ENCODE measurements at regions of chr9 and their contacts with region 1.

Region 1: GRCh38 chr9:130860458-130861316 is 25.6 kb downstream of the ABL1 start:
- DNase-seq: peak; percentile 22 to 85 (median 68)
- ATAC-seq: peak; percentile 95
- H3K4me3 ChIP-seq: no peak overlapping the region
- H3K27ac ChIP-seq: peak overlapping the region; percentile 34 to 35
- H3K4me1 ChIP-seq: peaks cover 5 to 23% of the 10 kb centered on the region in 2 donors
- H3K27me3 ChIP-seq: no peaks in the 10 kb centered on the region
- CTCF ChIP-seq: no peak

Region 2: GRCh38 chr9:130768265-130768664 is 92.4 kb before region 1 on chr9:
- intact Hi-C with region 1: loop called in 1 of 2 experiments (anchors 5 kb)
- DNase-seq: no peak
- ATAC-seq: peak; percentile 17
- H3K4me3 ChIP-seq: no peak overlapping the region
- H3K27ac ChIP-seq: no peak overlapping the region
- H3K4me1 ChIP-seq: peaks cover 11 to 30% of the 10 kb centered on the region in 2 donors
- H3K27me3 ChIP-seq: no peaks in the 10 kb centered on the region
- CTCF ChIP-seq: no peak